Activated T-helper 1 cell treated with anti-CD3 and anti-CD28 coated beads, Interleukin-12 subunit alpha, Interleukin-12 subunit beta, Interleukin-2, Interleukin-4 antibody, amounts not matched to agents 30 ng/mL and 10 ng/mL and 1 ng/mL, durations not matched to agents 14 hours and 24 hours and 36 hours (primary cell): ENCODE measurements at regions of chr3 and their contacts with region 1.

Region 1: DNA sequence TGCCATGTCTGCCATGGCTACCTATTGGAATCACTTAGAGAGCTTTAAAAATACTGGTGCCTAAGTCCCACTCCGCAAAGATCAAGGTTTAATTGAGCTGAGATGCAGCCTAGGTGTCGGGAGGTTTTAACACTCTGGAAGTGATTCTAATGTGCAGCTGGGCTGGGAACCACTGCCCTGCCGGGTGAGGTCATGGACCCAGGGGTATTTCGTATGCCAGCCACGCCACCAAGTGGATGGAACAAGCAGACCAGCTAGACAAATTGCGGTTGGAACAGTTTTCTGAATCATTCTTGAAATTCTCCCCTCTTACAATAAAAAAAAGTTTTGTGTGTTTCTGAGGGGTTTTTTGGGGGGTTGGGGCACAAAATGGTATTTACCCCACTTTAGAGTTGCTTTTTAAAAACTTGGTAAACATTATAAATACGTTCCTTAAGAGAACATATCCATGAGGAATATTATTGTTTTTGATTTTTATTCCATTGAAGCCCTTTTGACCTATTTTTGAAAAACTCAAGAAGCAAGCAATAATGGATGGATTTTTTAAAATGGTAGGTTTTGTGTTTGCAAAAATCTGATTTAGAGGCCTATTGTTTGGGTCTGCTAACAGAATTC is 66.2 kb upstream of the CSTA start:
- DNase-seq: peak; percentile 47
- H3K4me3 Mint-ChIP-seq: no peak overlapping the region
- H3K27ac Mint-ChIP-seq: peak overlapping the region; percentile 35
- H3K4me1 Mint-ChIP-seq: peaks cover 22% of the 10 kb centered on the region
- H3K27me3 Mint-ChIP-seq: peaks cover 17% of the 10 kb centered on the region

Region 2: GRCh38 chr3:121735047-121735696 is 523.7 kb before region 1 on chr3:
- intact Hi-C with region 1: loop called (anchors 5 kb)
- DNase-seq: no peak
- H3K4me3 Mint-ChIP-seq: no peak overlapping the region
- H3K27ac Mint-ChIP-seq: peak overlapping the region; percentile 36
- H3K4me1 Mint-ChIP-seq: peaks cover 41% of the 10 kb centered on the region
- H3K27me3 Mint-ChIP-seq: no peaks in the 10 kb centered on the region

Region 3: GRCh38 chr3:121989943-121990342 is 268.9 kb before region 1 on chr3:
- intact Hi-C with region 1: loop called (anchors 10 kb)
- DNase-seq: no peak
- H3K4me3 Mint-ChIP-seq: no peak overlapping the region
- H3K27ac Mint-ChIP-seq: no peak overlapping the region
- H3K4me1 Mint-ChIP-seq: peaks cover 25% of the 10 kb centered on the region
- H3K27me3 Mint-ChIP-seq: peaks cover 3% of the 10 kb centered on the region

Region 4: GRCh38 chr3:122233101-122233952 is 25.5 kb before region 1 on chr3:
- intact Hi-C with region 1: loop called (anchors 1 kb)
- DNase-seq: no peak
- H3K4me3 Mint-ChIP-seq: peak overlapping the region; percentile 3
- H3K27ac Mint-ChIP-seq: peak overlapping the region; percentile 7
- H3K4me1 Mint-ChIP-seq: peaks cover 18% of the 10 kb centered on the region
- H3K27me3 Mint-ChIP-seq: no peaks in the 10 kb centered on the region

Region 5: DNA sequence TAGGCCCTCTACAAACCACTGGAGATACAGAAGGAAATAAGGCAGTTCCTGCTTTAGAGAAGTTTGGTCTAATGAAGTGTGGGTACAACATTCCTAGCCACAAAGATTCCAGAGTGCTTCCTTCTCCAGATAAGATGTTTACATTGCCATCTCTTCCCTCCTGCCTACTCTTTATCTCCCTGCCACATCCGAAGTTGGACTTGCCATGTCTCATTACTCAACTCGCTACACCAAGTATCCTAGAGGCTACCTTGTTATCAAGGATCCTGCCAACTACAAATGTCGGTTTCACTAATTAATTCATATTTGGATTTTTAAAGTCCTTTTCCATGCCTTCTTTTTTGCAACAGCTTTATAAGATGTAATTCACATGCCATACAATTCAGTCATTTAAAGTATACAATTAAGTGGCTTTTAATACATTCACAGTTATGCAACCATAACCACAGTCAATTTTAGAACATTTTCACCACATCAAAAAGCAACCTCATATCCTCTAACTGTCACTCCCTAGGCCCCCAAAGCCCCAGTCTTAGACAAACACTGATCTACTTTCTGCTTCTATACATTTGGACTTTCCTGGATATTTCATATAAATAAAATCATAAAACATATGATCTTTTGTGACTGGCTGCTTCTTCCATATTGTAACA is 12.5 kb after region 1 on chr3:
- intact Hi-C with region 1: no loop called
- DNase-seq: no peak
- H3K4me3 Mint-ChIP-seq: peak overlapping the region; percentile 19
- H3K27ac Mint-ChIP-seq: no peak overlapping the region
- H3K4me1 Mint-ChIP-seq: peaks cover 30% of the 10 kb centered on the region
- H3K27me3 Mint-ChIP-seq: no peaks in the 10 kb centered on the region

Region 6: DNA sequence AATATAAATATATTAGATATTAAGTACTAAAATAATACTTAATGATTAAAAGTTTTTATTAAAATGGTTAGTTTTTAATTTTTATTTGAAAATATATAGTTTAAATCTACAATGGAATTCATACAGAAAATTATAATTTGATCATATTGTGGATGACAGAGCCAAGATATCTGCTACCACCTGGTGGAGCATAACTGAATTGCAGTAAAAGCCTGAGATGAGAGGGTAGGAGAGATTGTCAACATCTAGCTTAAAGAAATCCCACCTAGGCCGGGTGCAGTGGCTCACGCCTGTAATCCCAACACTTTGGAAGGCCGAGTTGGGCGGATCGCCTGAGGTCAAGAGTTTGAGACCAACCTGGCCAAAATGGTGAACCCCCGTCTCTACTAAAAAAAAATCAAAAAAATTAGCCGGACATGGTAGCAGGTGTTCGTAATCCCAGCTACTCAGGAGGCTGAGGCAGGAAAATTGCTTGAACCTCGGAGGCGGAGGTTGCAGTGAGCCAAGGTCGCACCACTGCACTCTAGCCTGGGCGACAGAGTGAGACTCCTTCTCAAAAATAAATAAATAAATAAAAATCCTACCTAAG is 41.1 kb after region 1 on chr3:
- intact Hi-C with region 1: loop called (anchors 1 kb)
- DNase-seq: no peak
- H3K4me3 Mint-ChIP-seq: no peak overlapping the region
- H3K27ac Mint-ChIP-seq: no peak overlapping the region
- H3K4me1 Mint-ChIP-seq: peaks cover 28% of the 10 kb centered on the region
- H3K27me3 Mint-ChIP-seq: no peaks in the 10 kb centered on the region